ENCODE measurements at regions of chr5 and their contacts with region 1.

Region 1: DNA sequence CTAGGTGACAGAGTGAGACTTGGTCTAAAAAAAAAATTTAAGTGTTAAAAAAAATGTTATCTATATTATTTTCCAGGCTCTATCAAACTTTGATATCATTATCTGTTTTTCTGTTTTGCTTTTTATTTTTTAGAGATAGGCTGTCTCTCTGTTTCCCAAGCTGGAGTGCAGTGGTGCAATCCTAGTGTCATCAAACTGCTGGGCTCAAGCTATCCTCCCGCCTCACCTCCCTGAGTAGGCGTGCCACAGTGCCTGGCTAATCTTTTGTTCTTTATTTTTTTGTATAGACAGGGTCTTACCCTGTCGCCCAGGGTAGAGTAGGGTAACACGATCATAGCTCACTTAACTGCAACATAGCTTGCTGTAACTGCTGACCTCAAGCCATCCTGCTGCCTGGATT is 14.4 kb downstream of the SEC24A start:
- DNase-seq: no peak
- ATAC-seq: no peak
- H3K4me3 ChIP-seq: no peak overlapping the region
- H3K27ac ChIP-seq: no peak overlapping the region
- H3K4me1 ChIP-seq: no peaks in the 10 kb centered on the region
- H3K27me3 ChIP-seq: no peaks in the 10 kb centered on the region
- CTCF ChIP-seq: no peak
- POLR2A ChIP-seq: no peak
- RAD21 ChIP-seq: no peak

Region 2: GRCh38 chr5:133635051-133635450 is 1027.9 kb before region 1 on chr5:
- CTCF ChIA-PET with region 1: no interaction called
- POLR2A ChIA-PET with region 1: no interaction called
- RAD21 ChIA-PET with region 1: no interaction called
- intact Hi-C with region 1: no loop called
- DNase-seq: no peak
- ATAC-seq: no peak
- H3K4me3 ChIP-seq: no peak overlapping the region
- H3K27ac ChIP-seq: no peak overlapping the region
- H3K4me1 ChIP-seq: no peaks in the 10 kb centered on the region
- H3K27me3 ChIP-seq: peaks cover 19% of the 10 kb centered on the region; the same call in 1 of the 2 replicates
- CTCF ChIP-seq: no peak
- POLR2A ChIP-seq: no peak
- RAD21 ChIP-seq: no peak

Region 3: GRCh38 chr5:134714120-134714519 is 51.1 kb after region 1 on chr5:
- CTCF ChIA-PET with region 1: no interaction called
- POLR2A ChIA-PET with region 1: no interaction called
- RAD21 ChIA-PET with region 1: no interaction called
- intact Hi-C with region 1: loop called (anchors 10 kb)
- DNase-seq: no peak
- ATAC-seq: peak; percentile 60
- H3K4me3 ChIP-seq: no peak overlapping the region
- H3K27ac ChIP-seq: no peak overlapping the region
- H3K4me1 ChIP-seq: peaks cover 3 to 4% of the 10 kb centered on the region in 2 experiments; a peak in 2 of 4 replicates
- H3K27me3 ChIP-seq: no peaks in the 10 kb centered on the region
- CTCF ChIP-seq: no peak
- POLR2A ChIP-seq: no peak
- RAD21 ChIP-seq: no peak

Measured in HCT116 (cell line).